ENCODE measurements at regions of chr7 and their contacts with region 1.

Region 1: GRCh38 chr7:97835296-97836138 is 36.7 kb downstream of the ASNS start:
- DNase-seq: peak; percentile 75
- H3K4me3 Mint-ChIP-seq: no peak overlapping the region
- H3K27ac Mint-ChIP-seq: no peak overlapping the region
- H3K4me1 Mint-ChIP-seq: no peaks in the 10 kb centered on the region
- H3K27me3 Mint-ChIP-seq: peaks cover 26% of the 10 kb centered on the region

Region 2: GRCh38 chr7:97104719-97105238 is 730.7 kb before region 1 on chr7:
- CTCF ChIA-PET with region 1: interaction called, 18 read pairs
- DNase-seq: peak; percentile 76
- H3K4me3 Mint-ChIP-seq: no peak overlapping the region
- H3K27ac Mint-ChIP-seq: no peak overlapping the region
- H3K4me1 Mint-ChIP-seq: no peaks in the 10 kb centered on the region
- H3K27me3 Mint-ChIP-seq: peaks cover 5% of the 10 kb centered on the region

Region 3: GRCh38 chr7:97845622-97846203 is 10.2 kb after region 1 on chr7:
- CTCF ChIA-PET with region 1: interaction called, 23 read pairs
- DNase-seq: peak; percentile 26
- H3K4me3 Mint-ChIP-seq: no peak overlapping the region
- H3K27ac Mint-ChIP-seq: no peak overlapping the region
- H3K4me1 Mint-ChIP-seq: no peaks in the 10 kb centered on the region
- H3K27me3 Mint-ChIP-seq: no peaks in the 10 kb centered on the region

Region 4: DNA sequence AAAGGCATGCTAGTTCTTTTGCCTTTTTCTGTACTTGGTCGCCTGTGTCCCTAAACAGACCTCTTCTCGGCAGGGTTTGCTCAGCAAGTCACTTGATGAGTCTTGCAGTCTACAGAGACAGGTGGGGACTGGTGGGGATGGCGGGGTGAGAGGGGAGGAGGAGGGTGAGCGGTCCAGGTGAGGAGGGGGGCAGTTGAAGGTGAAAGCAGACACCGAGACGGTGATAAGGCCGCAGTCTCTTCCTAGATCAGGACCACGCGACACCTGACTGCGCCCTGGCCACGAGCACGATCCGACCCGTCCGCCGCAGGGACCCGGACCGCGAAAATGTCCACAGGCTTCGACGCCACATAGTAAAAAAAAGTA is 36.1 kb after region 1 on chr7:
- CTCF ChIA-PET with region 1: no interaction called
- DNase-seq: peak; percentile 55
- H3K4me3 Mint-ChIP-seq: peak overlapping the region; percentile 85
- H3K27ac Mint-ChIP-seq: peak overlapping the region; percentile 90
- H3K4me1 Mint-ChIP-seq: peaks cover 29% of the 10 kb centered on the region
- H3K27me3 Mint-ChIP-seq: peaks cover 13% of the 10 kb centered on the region